Natural killer cell (primary cell): ENCODE measurements at regions of chr14 and their contacts with region 1.

Region 1: GRCh38 chr14:103715052-103716000 is at the starts of genes XRCC3 and ZFYVE21:
- DNase-seq: peak; percentile 99 to 100
- ATAC-seq: peak; percentile 92 to 98 (median 94)
- H3K4me3 ChIP-seq: peak within 1 kb of the TSS; percentile 49
- H3K4me3 Mint-ChIP-seq: peak within 1 kb of the TSS; percentile 94
- H3K27ac ChIP-seq: no peak within 1 kb of the TSS
- H3K27ac Mint-ChIP-seq: peak within 1 kb of the TSS; percentile 83 to 89
- H3K4me1 ChIP-seq: peaks cover 20% of the 10 kb centered on the region
- H3K4me1 Mint-ChIP-seq: peaks cover 11 to 31% of the 10 kb centered on the region in 2 donors
- H3K27me3 ChIP-seq: no peaks in the 10 kb centered on the region
- H3K27me3 Mint-ChIP-seq: no peaks in the 10 kb centered on the region
- CTCF ChIP-seq: no peak
- total RNA-seq, gene XRCC3: 11.6 to 12.8 (median 12.7) TPM
- total RNA-seq, gene ZFYVE21: 5.9 to 10.7 (median 8.5) TPM

Region 2: DNA sequence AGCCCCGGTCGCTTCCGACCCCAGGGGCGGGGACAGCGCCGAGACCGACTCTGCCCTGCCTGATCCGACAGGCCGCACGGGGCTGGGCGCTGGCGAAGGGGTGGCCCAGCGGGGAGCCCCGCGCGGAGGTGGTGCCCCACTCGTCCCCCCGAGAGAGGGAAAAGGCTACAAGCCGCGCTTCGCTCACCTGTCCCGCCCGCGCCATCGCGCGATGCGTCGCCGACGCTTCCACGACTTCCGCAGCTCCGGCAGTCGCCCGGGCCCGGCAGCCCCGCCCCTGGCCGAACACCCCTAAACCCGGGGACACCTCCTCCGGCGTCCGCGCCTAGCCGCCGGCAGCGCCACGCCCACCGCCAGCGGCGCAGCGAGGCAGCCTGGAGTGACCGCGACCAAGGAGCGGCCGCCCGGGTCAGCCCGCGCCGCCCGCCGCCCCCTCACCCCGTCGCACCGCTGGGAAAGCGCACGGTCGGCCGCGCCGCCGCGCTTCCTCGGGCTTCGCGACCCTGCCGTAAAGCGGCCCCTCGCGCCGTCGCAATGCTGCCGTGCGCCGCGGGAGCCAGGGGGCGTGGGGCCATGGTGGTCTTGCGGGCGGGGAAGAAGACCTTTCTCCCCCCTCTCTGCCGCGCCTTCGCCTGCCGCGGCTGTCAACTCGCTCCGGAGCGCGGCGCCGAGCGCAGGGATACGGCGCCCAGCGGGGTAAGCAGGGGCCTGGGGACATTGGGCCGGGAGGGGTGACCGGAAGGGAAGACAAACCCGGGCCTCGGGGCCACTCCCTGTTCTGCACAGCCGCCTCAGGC is 152.7 kb before region 1 on chr14 and contains the starts of genes BAG5 and COA8:
- intact Hi-C with region 1: loop called (anchors 1 kb)
- DNase-seq: peak; percentile 87 to 91
- ATAC-seq: peak; percentile 79 to 91 (median 84)
- H3K4me3 ChIP-seq: peak within 1 kb of the TSS; percentile 89
- H3K4me3 Mint-ChIP-seq: peak within 1 kb of the TSS; percentile 98
- H3K27ac ChIP-seq: peak within 1 kb of the TSS; percentile 77
- H3K27ac Mint-ChIP-seq: peak within 1 kb of the TSS; percentile 80 to 89
- H3K4me1 ChIP-seq: peaks cover 25% of the 10 kb centered on the region
- H3K4me1 Mint-ChIP-seq: peaks cover 36 to 47% of the 10 kb centered on the region in 2 donors
- H3K27me3 ChIP-seq: no peaks in the 10 kb centered on the region
- H3K27me3 Mint-ChIP-seq: no peaks in the 10 kb centered on the region
- CTCF ChIP-seq: no peak
- total RNA-seq, gene BAG5: 36.1 to 48.0 (median 47.0) TPM
- total RNA-seq, gene COA8: 22.2 to 32.0 (median 24.9) TPM